Transverse colon (tissue), 4 donors: ENCODE measurements at regions of chr11 and their contacts with region 1.

Region 1: GRCh38 chr11:1832211-1832919 is 2.4 kb upstream of the SYT8 start:
- DNase-seq: peak; percentile 67
- H3K4me3 ChIP-seq: peak overlapping the region in 1 of 4 donors; percentile 29
- H3K27ac ChIP-seq: peak overlapping the region in 3 of 4 donors; percentile 3 to 10 (median 6)
- H3K4me1 ChIP-seq: peaks cover 29 to 51% (median 48%) of the 10 kb centered on the region in 4 donors
- H3K27me3 ChIP-seq: peaks cover 6% of the 10 kb centered on the region
- CTCF ChIP-seq: peak; percentile 96 to 99 (median 99)
- EP300 ChIP-seq: no peak
- POLR2A ChIP-seq: no peak

Region 2: GRCh38 chr11:1652771-1653540 is 179.4 kb before region 1 on chr11:
- in situ Hi-C with region 1: no loop called
- intact Hi-C with region 1: loop called (anchors 5 kb)
- DNase-seq: peak; percentile 77
- H3K4me3 ChIP-seq: no peak overlapping the region
- H3K27ac ChIP-seq: no peak overlapping the region
- H3K4me1 ChIP-seq: peaks cover 0 to 3% (median 0%) of the 10 kb centered on the region in 4 donors
- H3K27me3 ChIP-seq: peaks cover 22% of the 10 kb centered on the region
- CTCF ChIP-seq: peak; percentile 95 to 99 (median 98)
- EP300 ChIP-seq: no peak
- POLR2A ChIP-seq: no peak

Region 3: GRCh38 chr11:1694064-1694845 is 138.1 kb before region 1 on chr11:
- in situ Hi-C with region 1: no loop called
- intact Hi-C with region 1: loop called (anchors 2 kb)
- DNase-seq: peak; percentile 91
- H3K4me3 ChIP-seq: peak overlapping the region; percentile 12 to 55 (median 17)
- H3K27ac ChIP-seq: peak overlapping the region in 3 of 4 donors; percentile 24 to 67 (median 42)
- H3K4me1 ChIP-seq: peaks cover 6 to 13% (median 11%) of the 10 kb centered on the region in 4 donors
- H3K27me3 ChIP-seq: peaks cover 13% of the 10 kb centered on the region
- CTCF ChIP-seq: peak; percentile 91 to 96 (median 95)
- EP300 ChIP-seq: no peak
- POLR2A ChIP-seq: no peak